Panc1 (cell line): ENCODE measurements at regions of chr9 and their contacts with region 1.

Region 1: GRCh38 chr9:127199001-127199791 is 65.4 kb upstream of the GARNL3 start:
- DNase-seq: peak; percentile 58
- ATAC-seq: peak; percentile 68
- H3K4me3 ChIP-seq: no peak overlapping the region
- H3K27ac ChIP-seq: no peak overlapping the region
- H3K4me1 ChIP-seq: 0 out of 2 replicates have a peak, but pooled peaks cover 2% of the 10 kb centered on the region
- H3K27me3 ChIP-seq: no peaks in the 10 kb centered on the region
- CTCF ChIP-seq: peak; percentile 87

Region 2: GRCh38 chr9:126939821-126940221 is 259.4 kb before region 1 on chr9:
- CTCF ChIA-PET with region 1: interaction called, 6 read pairs
- POLR2A ChIA-PET with region 1: no interaction called
- in situ Hi-C with region 1: no loop called
- intact Hi-C with region 1: loop called (anchors 2 kb)
- DNase-seq: no peak
- ATAC-seq: no peak
- H3K4me3 ChIP-seq: no peak overlapping the region
- H3K27ac ChIP-seq: no peak overlapping the region
- H3K4me1 ChIP-seq: no peaks in the 10 kb centered on the region
- H3K27me3 ChIP-seq: no peaks in the 10 kb centered on the region
- CTCF ChIP-seq: no peak

Region 3: DNA sequence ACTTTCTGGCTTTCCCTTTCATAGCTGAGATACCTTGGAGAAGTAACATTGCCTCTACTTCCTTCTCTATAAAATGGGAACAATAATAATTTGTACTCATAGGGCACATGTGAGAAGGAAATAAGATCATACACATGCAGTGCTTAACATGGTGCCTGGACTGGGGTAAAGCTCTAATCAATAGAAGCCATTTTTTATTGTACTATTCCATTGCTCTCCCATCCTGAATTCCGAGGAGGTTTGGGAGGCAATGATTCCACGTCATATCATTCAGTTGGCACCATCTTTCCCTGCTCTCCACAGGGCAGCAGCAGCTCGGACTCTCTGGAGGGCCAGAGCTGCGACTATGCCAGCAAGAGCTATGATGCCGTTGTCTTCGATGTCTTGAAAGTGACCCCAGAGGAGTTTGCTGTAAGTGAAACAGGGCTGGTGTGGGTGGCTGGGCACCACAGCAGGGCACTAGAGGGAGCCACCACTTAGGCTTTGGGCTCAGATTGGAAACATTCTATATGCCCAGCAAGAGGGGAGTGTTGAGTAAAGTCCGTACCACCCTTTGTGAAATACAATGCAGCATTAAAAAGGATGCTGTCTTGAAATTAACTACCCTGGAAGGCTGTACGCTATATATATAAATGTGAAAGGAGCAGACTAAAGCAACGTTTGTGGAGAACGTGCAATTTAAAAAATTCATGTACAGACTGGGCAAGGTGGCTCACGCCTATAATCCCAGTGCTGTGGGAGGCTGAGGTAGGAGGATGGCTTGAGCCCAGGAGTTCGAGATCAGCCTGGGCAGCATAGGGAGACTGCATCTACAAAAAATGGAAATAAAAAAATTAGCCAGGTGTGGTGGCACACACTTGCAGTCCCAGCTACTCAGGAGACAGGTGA is 233.4 kb before region 1 on chr9:
- CTCF ChIA-PET with region 1: interaction called, 6 read pairs
- POLR2A ChIA-PET with region 1: no interaction called
- in situ Hi-C with region 1: no loop called
- intact Hi-C with region 1: loop called (anchors 1 kb)
- DNase-seq: peak; percentile 38
- ATAC-seq: peak; percentile 96
- H3K4me3 ChIP-seq: no peak overlapping the region
- H3K27ac ChIP-seq: no peak overlapping the region
- H3K4me1 ChIP-seq: no peaks in the 10 kb centered on the region
- H3K27me3 ChIP-seq: no peaks in the 10 kb centered on the region
- CTCF ChIP-seq: peak; percentile 86